ENCODE measurements at regions of chr4 and their contacts with region 1.

Region 1: DNA sequence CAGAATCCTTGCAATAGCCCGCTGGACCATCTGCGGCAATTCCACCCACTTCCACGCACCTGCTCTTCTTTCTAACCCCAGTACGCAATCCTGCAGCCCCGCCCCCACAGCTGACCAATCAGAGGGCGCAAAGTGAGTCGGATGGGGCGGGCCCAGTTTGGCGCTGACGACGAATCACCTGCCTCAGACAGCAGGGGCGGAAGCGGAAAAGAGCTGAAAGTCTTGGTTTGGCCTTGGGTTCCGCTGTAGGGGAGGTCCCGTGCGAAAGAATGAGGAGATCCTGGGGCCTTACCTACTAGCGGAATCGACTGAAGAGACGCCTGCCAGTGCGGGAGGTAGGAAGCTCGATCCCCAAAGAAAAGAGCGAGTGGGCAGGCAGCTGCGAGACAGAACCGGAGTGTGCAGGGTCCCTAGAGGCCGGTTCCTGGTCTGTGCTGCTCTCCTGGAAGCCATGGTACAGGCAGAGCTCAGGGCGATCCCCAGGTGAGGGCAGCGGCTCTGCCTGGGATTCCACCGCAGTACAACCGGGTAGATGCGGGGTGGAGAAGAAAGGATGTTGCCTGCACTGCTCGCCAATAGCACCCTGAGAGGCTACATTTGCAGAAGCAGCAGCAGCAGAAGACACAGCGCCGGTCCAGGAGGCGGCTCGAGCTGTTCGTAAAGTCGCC is at the start of gene TMEM184C:
- DNase-seq: peak; percentile 98
- ATAC-seq: peak; percentile 98
- H3K4me3 Mint-ChIP-seq: peak within 1 kb of the TSS; percentile 97
- H3K27ac Mint-ChIP-seq: peak within 1 kb of the TSS; percentile 98
- H3K4me1 Mint-ChIP-seq: peaks cover 20% of the 10 kb centered on the region
- H3K27me3 Mint-ChIP-seq: peaks cover 12% of the 10 kb centered on the region
- total RNA-seq, gene TMEM184C: 22.5 to 24.0 TPM

Region 2: DNA sequence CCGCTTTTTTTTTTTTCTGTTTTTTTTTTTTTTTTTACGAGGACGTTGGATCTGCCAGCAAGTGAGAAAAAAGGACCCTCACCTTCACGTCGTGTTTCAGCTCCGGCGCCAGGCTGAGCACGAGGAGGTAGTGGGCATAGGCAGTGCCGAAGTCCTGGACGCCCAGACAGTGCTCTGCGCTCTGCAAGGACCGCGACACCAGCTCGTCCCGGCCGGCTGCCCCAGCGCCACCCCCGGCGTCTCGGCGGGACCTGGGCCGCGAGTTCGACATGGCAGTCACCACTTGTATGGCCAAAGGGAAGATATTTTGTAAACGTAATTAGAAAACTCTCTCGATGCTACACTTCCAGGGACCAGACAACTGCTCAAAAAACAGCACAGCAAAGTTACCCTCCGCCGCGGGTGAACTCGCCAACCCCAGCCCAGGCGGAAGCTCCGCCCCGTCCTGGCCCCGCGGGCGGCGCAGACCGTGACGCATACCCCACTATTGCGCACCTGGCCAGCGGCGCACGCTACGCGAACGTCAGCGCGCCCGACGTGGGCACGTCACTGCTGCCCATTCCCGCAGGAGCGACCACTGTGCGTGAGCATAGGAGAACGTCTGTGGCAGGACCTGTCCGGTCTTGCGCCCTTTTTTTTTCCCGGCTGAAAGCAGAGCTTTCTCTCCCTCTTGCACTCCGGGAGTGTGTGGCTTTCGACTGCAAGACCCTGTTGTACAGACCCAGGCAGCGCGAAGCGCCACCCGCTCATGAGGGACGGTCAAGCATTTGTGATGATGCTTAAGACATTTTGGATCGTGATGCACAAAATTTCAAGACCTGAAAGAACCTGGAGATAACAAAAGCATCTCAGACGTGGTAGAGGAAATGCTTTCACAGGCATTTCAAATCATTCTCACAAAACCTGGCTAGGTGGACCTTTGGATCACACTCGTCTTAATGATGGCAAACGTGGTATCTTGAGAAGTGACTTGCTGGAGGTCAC is 66.7 kb after region 1 on chr4 and contains the start of gene PRMT9:
- POLR2A ChIA-PET with region 1: interaction called, 53 read pairs
- DNase-seq: peak; percentile 91
- ATAC-seq: peak; percentile 96
- H3K4me3 Mint-ChIP-seq: peak within 1 kb of the TSS; percentile 99
- H3K27ac Mint-ChIP-seq: peak within 1 kb of the TSS; percentile 98
- H3K4me1 Mint-ChIP-seq: peaks cover 29% of the 10 kb centered on the region
- H3K27me3 Mint-ChIP-seq: peaks cover 5% of the 10 kb centered on the region
- total RNA-seq, gene PRMT9: 12.0 to 12.5 TPM

Region 3: GRCh38 chr4:147689067-147689466 is 71.8 kb after region 1 on chr4:
- POLR2A ChIA-PET with region 1: interaction called, 53 read pairs
- DNase-seq: no peak
- ATAC-seq: peak; percentile 67
- H3K4me3 Mint-ChIP-seq: peak overlapping the region; percentile 79
- H3K27ac Mint-ChIP-seq: peak overlapping the region; percentile 92
- H3K4me1 Mint-ChIP-seq: peaks cover 24% of the 10 kb centered on the region
- H3K27me3 Mint-ChIP-seq: peaks cover 17% of the 10 kb centered on the region

Measured in activated naive CD8-positive, alpha-beta T cell treated with anti-CD3 and anti-CD28 coated beads, Interleukin-2, amount 10 ng/mL, durations not matched to agents 7 days and 5 days (primary cell).